CD4-positive, alpha-beta memory T cell (primary cell): ENCODE measurements at regions of chr19 and their contacts with region 1.

Region 1: DNA sequence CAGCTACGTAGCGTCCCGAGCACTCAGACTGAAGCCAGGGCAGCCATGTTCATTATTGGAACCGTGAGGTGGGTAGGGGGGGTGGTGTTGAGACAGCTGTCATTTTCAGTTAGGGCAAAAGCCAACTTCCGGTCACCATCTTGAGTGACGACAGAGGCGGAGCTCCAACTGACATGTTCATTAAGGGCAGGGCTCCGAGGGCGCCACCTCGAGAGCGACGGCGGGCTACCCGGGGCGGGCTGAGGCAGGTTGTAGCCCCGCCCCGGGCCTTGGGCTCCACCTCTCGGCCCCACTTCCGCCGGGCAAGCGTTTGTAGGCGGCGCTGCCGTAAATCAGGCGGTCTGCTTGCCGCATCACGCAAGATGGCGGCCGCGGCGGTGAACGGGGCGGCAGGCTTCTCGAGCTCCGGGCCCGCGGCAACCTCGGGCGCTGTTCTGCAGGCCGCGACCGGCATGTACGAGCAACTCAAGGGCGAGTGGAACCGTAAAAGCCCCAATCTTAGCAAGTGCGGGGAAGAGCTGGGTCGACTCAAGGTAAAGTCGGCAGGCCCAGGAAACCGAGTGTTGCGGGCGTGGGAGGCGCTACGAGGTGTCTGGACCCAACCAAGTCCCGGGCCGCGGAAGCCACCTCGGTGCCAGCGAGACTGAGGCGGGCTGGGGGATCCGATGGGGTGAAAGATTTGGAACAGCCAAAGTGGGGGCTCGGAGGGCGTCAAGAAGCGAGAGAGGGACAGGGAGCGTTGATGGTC is at the start of gene PSMD8:
- DNase-seq: peak; percentile 98 to 99 (median 99)
- H3K4me3 ChIP-seq: peak within 1 kb of the TSS; percentile 71 to 97
- H3K4me3 Mint-ChIP-seq: peak within 1 kb of the TSS; percentile 96 to 99 (median 98)
- H3K27ac ChIP-seq: peak within 1 kb of the TSS; percentile 94
- H3K27ac Mint-ChIP-seq: peak within 1 kb of the TSS; percentile 90 to 99 (median 98)
- H3K4me1 ChIP-seq: peaks cover 30% of the 10 kb centered on the region
- H3K4me1 Mint-ChIP-seq: peaks cover 19 to 34% (median 24%) of the 10 kb centered on the region in 4 donors
- H3K27me3 ChIP-seq: no peaks in the 10 kb centered on the region
- H3K27me3 Mint-ChIP-seq: peaks cover 2% of the 10 kb centered on the region in 2 donors
- total RNA-seq, gene PSMD8: 89.6 to 90.6 TPM

Region 2: GRCh38 chr19:38245826-38246498 is 128.6 kb before region 1 on chr19:
- CTCF ChIA-PET with region 1: interaction called, 20 read pairs
- POLR2A ChIA-PET with region 1: interaction called, 8 read pairs
- intact Hi-C with region 1: no loop called
- DNase-seq: no peak
- H3K4me3 ChIP-seq: no peak overlapping the region
- H3K4me3 Mint-ChIP-seq: no peak overlapping the region
- H3K27ac ChIP-seq: no peak overlapping the region
- H3K27ac Mint-ChIP-seq: no peak overlapping the region
- H3K4me1 ChIP-seq: no peaks in the 10 kb centered on the region
- H3K4me1 Mint-ChIP-seq: peaks cover 2 to 5% (median 3%) of the 10 kb centered on the region in 4 donors
- H3K27me3 ChIP-seq: no peaks in the 10 kb centered on the region
- H3K27me3 Mint-ChIP-seq: peaks cover 0 to 4% of the 10 kb centered on the region in 2 donors

Region 3: GRCh38 chr19:38315657-38316476 is 58.7 kb before region 1 on chr19 and contains the start of gene YIF1B:
- CTCF ChIA-PET with region 1: interaction called, 3 read pairs
- POLR2A ChIA-PET with region 1: no interaction called
- intact Hi-C with region 1: loop called (anchors 1 kb)
- DNase-seq: peak; percentile 96 to 98 (median 96)
- H3K4me3 ChIP-seq: peak within 1 kb of the TSS; percentile 83 to 97
- H3K4me3 Mint-ChIP-seq: peak within 1 kb of the TSS; percentile 80 to 98 (median 94)
- H3K27ac ChIP-seq: peak within 1 kb of the TSS; percentile 91
- H3K27ac Mint-ChIP-seq: peak within 1 kb of the TSS; percentile 89 to 99 (median 96)
- H3K4me1 ChIP-seq: peaks cover 40% of the 10 kb centered on the region
- H3K4me1 Mint-ChIP-seq: peaks cover 23 to 64% (median 44%) of the 10 kb centered on the region in 4 donors
- H3K27me3 ChIP-seq: no peaks in the 10 kb centered on the region
- H3K27me3 Mint-ChIP-seq: no peaks in the 10 kb centered on the region
- total RNA-seq, gene YIF1B: 35.8 to 38.4 TPM

Region 4: GRCh38 chr19:38361633-38362075 is 12.9 kb before region 1 on chr19:
- CTCF ChIA-PET with region 1: interaction called, 3 read pairs
- POLR2A ChIA-PET with region 1: interaction called, 28 read pairs
- intact Hi-C with region 1: loop called (anchors 1 kb)
- DNase-seq: peak; percentile 39 to 74 (median 54)
- H3K4me3 ChIP-seq: peak overlapping the region; percentile 11 to 68
- H3K4me3 Mint-ChIP-seq: peak overlapping the region; percentile 80 to 87 (median 86)
- H3K27ac ChIP-seq: no peak overlapping the region
- H3K27ac Mint-ChIP-seq: peak overlapping the region in 3 of 7 donors; percentile 37 to 69 (median 55)
- H3K4me1 ChIP-seq: peaks cover 13% of the 10 kb centered on the region
- H3K4me1 Mint-ChIP-seq: peaks cover 0 to 26% (median 13%) of the 10 kb centered on the region in 4 donors
- H3K27me3 ChIP-seq: no peaks in the 10 kb centered on the region
- H3K27me3 Mint-ChIP-seq: peaks cover 0 to 7% of the 10 kb centered on the region in 2 donors

Region 5: GRCh38 chr19:38387550-38388348 is 13.1 kb after region 1 on chr19 and contains the start of gene GGN:
- CTCF ChIA-PET with region 1: interaction called, 9 read pairs
- POLR2A ChIA-PET with region 1: interaction called, 78 read pairs
- intact Hi-C with region 1: loop called (anchors 1 kb)
- DNase-seq: peak; percentile 77 to 92 (median 80)
- H3K4me3 ChIP-seq: peak within 1 kb of the TSS; percentile 65 to 70
- H3K4me3 Mint-ChIP-seq: peak within 1 kb of the TSS; percentile 89 to 98 (median 94)
- H3K27ac ChIP-seq: peak within 1 kb of the TSS; percentile 21
- H3K27ac Mint-ChIP-seq: peak within 1 kb of the TSS; percentile 80 to 99 (median 95)
- H3K4me1 ChIP-seq: peaks cover 31% of the 10 kb centered on the region
- H3K4me1 Mint-ChIP-seq: peaks cover 12 to 44% (median 18%) of the 10 kb centered on the region in 4 donors
- H3K27me3 ChIP-seq: no peaks in the 10 kb centered on the region
- H3K27me3 Mint-ChIP-seq: peaks cover 0 to 11% of the 10 kb centered on the region in 2 donors
- total RNA-seq, gene GGN: 0.15 TPM in 1 of 2 experiments, not detected in the other

Region 6: DNA sequence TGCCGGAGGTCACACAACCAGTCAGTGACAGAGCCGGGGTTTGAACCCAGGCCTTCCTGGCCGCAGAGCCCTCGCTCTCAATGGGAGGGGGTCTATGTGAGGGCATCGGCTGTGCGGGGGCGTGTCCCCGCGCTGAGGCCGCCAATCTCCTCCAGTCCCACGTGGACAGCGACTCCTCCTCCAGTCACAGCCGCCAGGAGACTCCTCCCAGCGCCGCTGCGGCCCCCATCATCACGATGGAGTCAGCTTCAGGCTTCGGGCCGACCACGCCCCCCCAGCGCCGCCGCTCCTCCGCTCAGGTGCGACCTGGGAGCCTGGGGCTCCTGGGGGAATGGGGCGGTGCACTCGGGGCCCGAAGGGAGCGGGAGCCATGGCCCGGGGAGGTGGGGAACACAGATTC is 19.9 kb after region 1 on chr19:
- CTCF ChIA-PET with region 1: interaction called, 4 read pairs
- POLR2A ChIA-PET with region 1: interaction called, 78 read pairs
- intact Hi-C with region 1: no loop called
- DNase-seq: peak; percentile 53 to 78 (median 58)
- H3K4me3 ChIP-seq: peak overlapping the region; percentile 29 to 51
- H3K4me3 Mint-ChIP-seq: peak overlapping the region; percentile 73 to 85 (median 80)
- H3K27ac ChIP-seq: no peak overlapping the region
- H3K27ac Mint-ChIP-seq: peak overlapping the region in 6 of 7 donors; percentile 32 to 89 (median 72)
- H3K4me1 ChIP-seq: peaks cover 24% of the 10 kb centered on the region
- H3K4me1 Mint-ChIP-seq: peaks cover 8 to 42% (median 23%) of the 10 kb centered on the region in 4 donors
- H3K27me3 ChIP-seq: no peaks in the 10 kb centered on the region
- H3K27me3 Mint-ChIP-seq: no peaks in the 10 kb centered on the region

Region 7: GRCh38 chr19:38417544-38418506 is 43.2 kb after region 1 on chr19:
- CTCF ChIA-PET with region 1: no interaction called
- POLR2A ChIA-PET with region 1: no interaction called
- intact Hi-C with region 1: no loop called
- DNase-seq: peak; percentile 29 to 60 (median 42)
- H3K4me3 ChIP-seq: peak overlapping the region; percentile 17 to 58
- H3K4me3 Mint-ChIP-seq: peak overlapping the region; percentile 78 to 90 (median 86)
- H3K27ac ChIP-seq: peak overlapping the region; percentile 52
- H3K27ac Mint-ChIP-seq: peak overlapping the region; percentile 82 to 96 (median 92)
- H3K4me1 ChIP-seq: peaks cover 20% of the 10 kb centered on the region
- H3K4me1 Mint-ChIP-seq: peaks cover 18 to 29% (median 22%) of the 10 kb centered on the region in 4 donors
- H3K27me3 ChIP-seq: no peaks in the 10 kb centered on the region
- H3K27me3 Mint-ChIP-seq: peaks cover 0 to 2% of the 10 kb centered on the region in 2 donors

Region 8: DNA sequence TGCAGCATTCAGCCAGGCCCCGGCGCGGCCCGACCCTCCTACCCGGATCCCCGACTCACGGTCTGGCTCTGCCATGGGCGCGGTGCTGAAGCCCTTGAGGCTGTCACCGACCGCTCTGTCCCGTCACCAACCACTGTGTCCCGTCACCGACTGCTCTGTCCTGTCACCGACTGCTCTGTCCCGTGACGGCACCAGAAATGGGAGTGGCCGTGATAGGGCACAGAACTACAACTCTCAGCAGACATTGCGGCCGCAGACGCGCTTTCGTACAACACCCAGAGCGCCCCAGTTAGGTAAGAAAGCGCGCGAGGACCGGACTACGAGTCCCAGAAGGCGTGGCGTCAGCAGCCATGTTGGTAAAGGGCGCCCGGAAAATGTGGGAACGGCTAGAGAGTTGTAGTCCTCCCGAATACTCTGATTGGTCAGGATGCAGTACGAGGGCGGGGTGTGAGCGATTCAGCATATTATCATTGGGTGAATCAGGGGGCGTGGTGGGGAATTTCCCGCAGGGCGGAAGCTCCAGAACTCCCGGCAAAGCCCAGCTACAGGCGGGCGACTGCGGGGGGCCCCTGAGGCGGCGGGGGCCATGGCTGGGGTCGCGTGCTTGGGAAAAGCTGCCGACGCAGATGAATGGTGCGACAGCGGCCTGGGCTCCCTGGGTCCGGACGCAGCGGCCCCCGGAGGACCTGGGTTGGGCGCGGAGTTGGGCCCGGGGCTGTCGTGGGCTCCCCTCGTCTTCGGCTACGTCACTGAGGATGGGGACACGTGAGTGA is 525.0 kb after region 1 on chr19 and contains the starts of genes NFKBIB and SIRT2:
- CTCF ChIA-PET with region 1: no interaction called
- POLR2A ChIA-PET with region 1: interaction called, 4 read pairs
- intact Hi-C with region 1: loop called (anchors 1 kb)
- DNase-seq: peak; percentile 98 to 100 (median 100)
- H3K4me3 ChIP-seq: peak within 1 kb of the TSS; percentile 71 to 87
- H3K4me3 Mint-ChIP-seq: peak within 1 kb of the TSS; percentile 92 to 98 (median 96)
- H3K27ac ChIP-seq: peak within 1 kb of the TSS; percentile 99
- H3K27ac Mint-ChIP-seq: peak within 1 kb of the TSS; percentile 90 to 100 (median 99)
- H3K4me1 ChIP-seq: peaks cover 34% of the 10 kb centered on the region
- H3K4me1 Mint-ChIP-seq: peaks cover 17 to 59% (median 39%) of the 10 kb centered on the region in 4 donors
- H3K27me3 ChIP-seq: no peaks in the 10 kb centered on the region
- H3K27me3 Mint-ChIP-seq: no peaks in the 10 kb centered on the region
- total RNA-seq, gene NFKBIB: 23.9 to 26.0 TPM
- total RNA-seq, gene SIRT2: 47.0 to 50.0 TPM